Gastrocnemius medialis (tissue), 4 donors: ENCODE measurements at regions of chr13 and their contacts with region 1.

Region 1: DNA sequence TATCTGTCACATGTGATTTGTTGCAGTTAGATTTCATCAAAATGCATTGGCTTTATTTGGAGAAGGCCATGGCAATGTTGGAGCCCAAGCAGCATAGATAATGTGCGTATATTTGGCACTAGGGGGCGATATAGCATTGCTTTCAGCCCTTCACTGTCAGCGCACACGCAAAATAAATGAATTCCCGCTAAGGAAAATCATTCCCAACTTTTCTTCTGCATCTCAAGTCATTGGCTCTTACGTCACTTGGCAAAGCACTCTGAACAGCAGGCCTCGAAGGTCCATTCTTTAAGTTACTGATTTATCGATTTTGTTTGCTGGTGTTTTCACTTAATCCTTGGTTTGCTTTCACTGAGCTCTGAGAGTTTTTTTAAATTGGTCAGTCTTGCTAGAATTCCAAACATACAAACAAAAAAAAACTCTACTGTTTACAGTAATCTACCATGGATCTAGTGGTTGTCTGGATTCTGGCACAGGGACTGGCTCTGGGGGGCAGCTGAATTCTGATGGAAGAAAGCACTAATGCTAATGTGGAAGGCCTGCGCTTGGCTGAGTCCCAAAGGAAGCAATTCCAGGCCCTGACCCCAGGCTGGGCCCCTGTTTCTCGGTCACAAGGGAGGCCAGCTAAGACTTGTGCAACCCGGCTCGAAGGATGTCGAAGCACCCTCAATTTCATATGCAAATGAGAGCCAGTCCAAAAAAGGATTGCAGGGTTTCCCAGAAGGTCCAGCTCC is 97.7 kb upstream of the IPO5 start:
- DNase-seq: peak; percentile 15 to 29
- ATAC-seq: peak; percentile 76 to 87
- H3K4me3 ChIP-seq: no peak overlapping the region
- H3K27ac ChIP-seq: peak overlapping the region in 1 of 4 donors; percentile 19
- H3K4me1 ChIP-seq: peaks cover 0 to 6% of the 10 kb centered on the region in 2 donors
- H3K27me3 ChIP-seq: no peaks in the 10 kb centered on the region
- CTCF ChIP-seq: peak; percentile 59 to 79 (median 61)
- POLR2A ChIP-seq: no peak

Region 2: GRCh38 chr13:97460004-97460775 is 395.5 kb before region 1 on chr13:
- in situ Hi-C with region 1: no loop called
- intact Hi-C with region 1: no loop called
- DNase-seq: no peak
- ATAC-seq: peak in 1 of 2 donors; percentile 55
- H3K4me3 ChIP-seq: no peak overlapping the region
- H3K27ac ChIP-seq: peak overlapping the region in 1 of 4 donors; percentile 30
- H3K4me1 ChIP-seq: peaks cover 10 to 14% of the 10 kb centered on the region in 2 donors
- H3K27me3 ChIP-seq: no peaks in the 10 kb centered on the region
- CTCF ChIP-seq: no peak
- POLR2A ChIP-seq: no peak

Region 3: GRCh38 chr13:97798836-97799235 is 56.9 kb before region 1 on chr13:
- in situ Hi-C with region 1: no loop called
- intact Hi-C with region 1: no loop called
- DNase-seq: no peak
- ATAC-seq: no peak
- H3K4me3 ChIP-seq: no peak overlapping the region
- H3K27ac ChIP-seq: no peak overlapping the region
- H3K4me1 ChIP-seq: no peaks in the 10 kb centered on the region
- H3K27me3 ChIP-seq: no peaks in the 10 kb centered on the region
- CTCF ChIP-seq: no peak
- POLR2A ChIP-seq: no peak

Region 4: DNA sequence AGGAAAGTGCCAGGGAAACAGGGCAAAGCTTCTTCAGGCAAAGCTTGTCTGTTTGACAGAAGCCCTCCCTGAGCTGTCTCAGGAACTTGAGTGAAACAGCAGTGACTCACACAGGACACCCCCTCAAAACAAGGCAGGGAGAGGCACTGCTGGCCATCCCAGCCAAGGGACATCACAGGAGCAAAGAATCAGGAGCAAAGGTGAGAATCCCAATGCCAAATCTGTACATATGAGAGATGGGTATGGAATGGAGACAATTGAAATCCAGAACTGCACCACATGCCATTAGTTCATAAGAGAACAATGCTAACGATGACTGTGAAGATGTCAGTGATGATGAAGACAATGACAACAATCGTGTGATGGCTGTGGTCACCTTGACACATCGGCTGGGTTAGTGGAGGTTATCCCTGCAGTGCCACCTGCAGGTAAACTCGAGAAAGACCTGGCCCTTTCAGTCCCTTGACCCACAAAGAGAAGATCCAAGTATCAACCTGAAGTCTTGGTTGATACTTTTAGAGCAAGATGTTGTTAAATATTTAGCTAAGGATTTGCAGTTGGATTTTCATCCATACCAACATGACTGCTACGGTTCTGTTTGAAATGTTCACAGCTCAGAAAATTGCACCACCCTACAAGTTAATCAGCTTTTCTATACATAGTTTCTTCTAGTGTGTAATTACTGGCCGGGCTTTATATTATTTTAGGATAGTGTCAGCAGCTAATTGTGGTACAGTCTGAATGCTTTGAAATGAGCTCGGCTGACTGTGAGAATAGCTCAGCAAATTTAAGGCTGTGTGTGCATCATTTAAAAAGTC is 55.8 kb after region 1 on chr13:
- in situ Hi-C with region 1: no loop called
- intact Hi-C with region 1: loop called (anchors 5 kb)
- DNase-seq: no peak
- ATAC-seq: no peak
- H3K4me3 ChIP-seq: no peak overlapping the region
- H3K27ac ChIP-seq: no peak overlapping the region
- H3K4me1 ChIP-seq: no peaks in the 10 kb centered on the region
- H3K27me3 ChIP-seq: no peaks in the 10 kb centered on the region
- CTCF ChIP-seq: peak in 2 of 5 experiments; percentile 15 to 33
- POLR2A ChIP-seq: no peak

Region 5: DNA sequence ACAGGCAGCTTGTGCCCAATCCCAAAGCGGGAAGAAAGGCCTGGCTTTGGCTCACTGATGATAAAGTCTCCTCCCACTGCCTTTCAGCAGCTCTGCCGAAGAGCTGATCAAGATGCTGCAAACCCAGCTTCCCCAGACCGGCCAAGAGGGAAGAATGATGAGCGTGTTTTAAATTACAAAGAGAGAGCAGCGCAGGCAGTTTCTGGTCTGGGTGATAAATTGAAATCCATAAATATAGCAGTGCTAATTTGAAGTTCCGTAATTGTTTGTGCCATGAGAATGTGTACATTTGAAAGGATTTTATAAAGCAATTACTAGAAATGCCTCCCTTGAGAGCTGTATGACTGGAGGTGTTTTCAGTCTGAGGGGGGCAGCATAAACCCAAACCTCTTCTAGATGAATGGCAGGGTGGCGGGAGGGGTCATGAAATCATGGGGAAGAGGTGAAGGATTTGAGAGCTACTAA is 549.4 kb after region 1 on chr13:
- in situ Hi-C with region 1: loop called in 1 of 4 experiments (anchors 25 kb)
- intact Hi-C with region 1: no loop called
- DNase-seq: no peak
- ATAC-seq: no peak
- H3K4me3 ChIP-seq: no peak overlapping the region
- H3K27ac ChIP-seq: no peak overlapping the region
- H3K4me1 ChIP-seq: no peaks in the 10 kb centered on the region
- H3K27me3 ChIP-seq: no peaks in the 10 kb centered on the region
- CTCF ChIP-seq: no peak
- POLR2A ChIP-seq: no peak

Region 6: GRCh38 chr13:98672944-98673545 is 817.3 kb after region 1 on chr13:
- in situ Hi-C with region 1: loop called in 3 of 4 experiments (anchors 25 kb)
- intact Hi-C with region 1: loop called (anchors 5 kb)
- DNase-seq: peak; percentile 50 to 86
- ATAC-seq: peak; percentile 92 to 96
- H3K4me3 ChIP-seq: peak overlapping the region in 1 of 4 donors; percentile 0
- H3K27ac ChIP-seq: peak overlapping the region in 1 of 4 donors; percentile 34
- H3K4me1 ChIP-seq: peaks cover 6 to 10% of the 10 kb centered on the region in 2 donors
- H3K27me3 ChIP-seq: no peaks in the 10 kb centered on the region
- CTCF ChIP-seq: peak; percentile 70 to 90 (median 79)
- POLR2A ChIP-seq: no peak

Region 7: GRCh38 chr13:98842864-98843481 is 987.2 kb after region 1 on chr13:
- in situ Hi-C with region 1: no loop called
- intact Hi-C with region 1: loop called (anchors 10 kb)
- DNase-seq: peak in 1 of 2 donors; percentile 23
- ATAC-seq: peak; percentile 56 to 68
- H3K4me3 ChIP-seq: no peak overlapping the region
- H3K27ac ChIP-seq: no peak overlapping the region
- H3K4me1 ChIP-seq: no peaks in the 10 kb centered on the region
- H3K27me3 ChIP-seq: no peaks in the 10 kb centered on the region
- CTCF ChIP-seq: peak; percentile 44 to 77 (median 60)
- POLR2A ChIP-seq: no peak